H1 (cell line): ENCODE measurements at regions of chr2 and their contacts with region 1.

Region 1: GRCh38 chr2:75108937-75109482 is 90.3 kb downstream of the TACR1 start:
- DNase-seq: no peak
- H3K4me3 ChIP-seq: no peak overlapping the region
- H3K27ac ChIP-seq: no peak overlapping the region
- H3K4me1 ChIP-seq: peaks cover 0 to 4% (median 0%) of the 10 kb centered on the region in 4 experiments; a peak in 1 of 7 replicates
- H3K27me3 ChIP-seq: no peaks in the 10 kb centered on the region
- CTCF ChIP-seq: no peak
- EP300 ChIP-seq: no peak
- POLR2A ChIP-seq: no peak
- RAD21 ChIP-seq: no peak

Region 2: DNA sequence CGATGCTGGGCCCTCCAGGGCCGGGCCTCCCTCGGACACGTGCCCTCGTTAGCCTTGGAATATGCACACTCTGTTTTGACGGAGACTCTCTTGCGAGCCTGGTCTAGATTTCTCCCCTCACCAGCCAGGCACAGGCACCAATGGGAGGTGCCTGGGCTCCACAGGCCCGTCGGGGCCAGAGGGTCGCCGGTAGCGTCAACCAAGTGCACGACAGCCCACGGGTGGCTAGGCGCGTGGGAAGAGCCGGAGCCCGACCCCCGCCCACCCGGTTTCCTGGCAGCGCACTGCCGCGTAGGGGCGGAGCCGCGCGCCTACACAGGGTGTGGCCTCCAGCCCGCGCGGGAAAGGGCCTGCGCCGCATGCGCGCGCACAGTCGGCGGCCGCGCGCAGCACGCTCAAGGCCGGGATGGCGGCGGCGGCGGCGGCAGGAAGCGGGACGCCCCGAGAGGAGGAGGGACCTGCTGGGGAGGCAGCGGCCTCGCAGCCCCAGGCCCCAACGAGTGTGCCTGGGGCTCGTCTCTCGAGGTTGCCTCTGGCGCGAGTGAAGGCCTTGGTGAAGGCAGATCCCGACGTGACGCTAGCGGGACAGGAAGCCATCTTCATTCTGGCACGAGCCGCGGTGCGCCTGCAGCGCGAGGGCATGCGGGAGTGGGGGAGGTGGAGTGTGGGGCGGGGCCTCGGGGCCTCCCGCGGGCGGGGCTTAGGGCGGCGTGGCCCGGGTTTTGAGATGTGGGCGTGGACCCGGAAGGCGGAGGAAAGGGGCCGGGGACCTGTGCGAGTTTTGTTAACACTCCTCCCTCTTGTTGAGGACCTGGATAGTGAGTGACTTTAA is 150.5 kb before region 1 on chr2 and contains the start of gene POLE4:
- CTCF ChIA-PET with region 1: no interaction called
- POLR2A ChIA-PET with region 1: no interaction called
- DNase-seq: peak; percentile 54 to 95
- H3K4me3 ChIP-seq: peak within 1 kb of the TSS; percentile 61 to 69 (median 64)
- H3K27ac ChIP-seq: peak within 1 kb of the TSS; percentile 91
- H3K4me1 ChIP-seq: peaks cover 0 to 3% (median 2%) of the 10 kb centered on the region in 4 experiments; a peak in 3 of 7 replicates
- H3K27me3 ChIP-seq: peaks cover 0 to 17% (median 11%) of the 10 kb centered on the region in 4 experiments; a peak in 6 of 7 replicates
- CTCF ChIP-seq: no peak
- EP300 ChIP-seq: no peak
- POLR2A ChIP-seq: peak; percentile 89
- RAD21 ChIP-seq: no peak; a peak in 1 of 4 replicates
- total RNA-seq, gene POLE4: 44.4 and 44.7 TPM in 2 replicates

Region 3: DNA sequence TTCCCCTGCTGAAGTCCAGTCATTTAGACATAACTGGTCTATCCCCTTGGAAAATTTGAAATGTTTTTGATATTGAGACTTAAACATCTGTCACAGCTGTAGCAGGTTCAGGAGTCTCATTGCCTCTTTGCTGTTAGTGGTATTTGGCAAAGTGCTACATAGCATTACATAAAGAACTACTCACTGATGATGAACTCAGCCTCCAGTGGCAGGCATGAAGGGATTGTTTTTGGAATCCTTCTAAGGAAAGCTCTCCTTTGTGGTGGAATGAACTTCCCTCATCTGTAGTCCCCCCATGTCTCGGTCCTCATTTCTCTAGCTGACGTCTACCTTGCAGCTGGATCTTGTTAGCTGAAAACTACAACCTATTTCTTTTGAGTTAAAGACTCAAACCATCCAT is 21.3 kb before region 1 on chr2:
- CTCF ChIA-PET with region 1: no interaction called
- POLR2A ChIA-PET with region 1: no interaction called
- DNase-seq: no peak
- H3K4me3 ChIP-seq: no peak overlapping the region
- H3K27ac ChIP-seq: no peak overlapping the region
- H3K4me1 ChIP-seq: 0 out of 7 replicates have a peak, but pooled peaks cover 0 to 3% (median 0%) of the 10 kb centered on the region in 4 experiments
- H3K27me3 ChIP-seq: no peaks in the 10 kb centered on the region; a peak in 1 of 7 replicates
- CTCF ChIP-seq: no peak
- EP300 ChIP-seq: no peak
- POLR2A ChIP-seq: no peak
- RAD21 ChIP-seq: no peak

Region 4: GRCh38 chr2:75098856-75099255 is 10.2 kb before region 1 on chr2:
- CTCF ChIA-PET with region 1: interaction called, 18 read pairs
- POLR2A ChIA-PET with region 1: no interaction called
- DNase-seq: no peak
- H3K4me3 ChIP-seq: no peak overlapping the region
- H3K27ac ChIP-seq: no peak overlapping the region
- H3K4me1 ChIP-seq: no peaks in the 10 kb centered on the region
- H3K27me3 ChIP-seq: no peaks in the 10 kb centered on the region
- CTCF ChIP-seq: peak; percentile 46 to 64 (median 55)
- EP300 ChIP-seq: no peak
- POLR2A ChIP-seq: no peak
- RAD21 ChIP-seq: peak; percentile 68 to 69